ENCODE measurements at regions of chr7 and their contacts with region 1.

Region 1: GRCh38 chr7:140003913-140004382 is 58.8 kb downstream of the PARP12 start:
- DNase-seq: peak; percentile 38 to 67
- H3K4me3 ChIP-seq: no peak overlapping the region
- H3K4me3 Mint-ChIP-seq: no peak overlapping the region
- H3K27ac Mint-ChIP-seq: no peak overlapping the region
- H3K4me1 ChIP-seq: no peaks in the 10 kb centered on the region
- H3K4me1 Mint-ChIP-seq: no peaks in the 10 kb centered on the region
- H3K27me3 ChIP-seq: no peaks in the 10 kb centered on the region
- H3K27me3 Mint-ChIP-seq: no peaks in the 10 kb centered on the region
- CTCF ChIP-seq: peak; percentile 50 to 57

Region 2: GRCh38 chr7:139500770-139501138 is 503.2 kb before region 1 on chr7:
- CTCF ChIA-PET with region 1: interaction called, 3 read pairs
- POLR2A ChIA-PET with region 1: no interaction called
- intact Hi-C with region 1: loop called (anchors 1 kb)
- DNase-seq: no peak
- H3K4me3 ChIP-seq: no peak overlapping the region
- H3K4me3 Mint-ChIP-seq: peak overlapping the region; percentile 72
- H3K27ac Mint-ChIP-seq: no peak overlapping the region
- H3K4me1 ChIP-seq: no peaks in the 10 kb centered on the region; the same call in 1 of the 2 replicates
- H3K4me1 Mint-ChIP-seq: peaks cover 7% of the 10 kb centered on the region
- H3K27me3 ChIP-seq: no peaks in the 10 kb centered on the region
- H3K27me3 Mint-ChIP-seq: no peaks in the 10 kb centered on the region
- CTCF ChIP-seq: no peak

Region 3: GRCh38 chr7:139620676-139621344 is 383.1 kb before region 1 on chr7:
- CTCF ChIA-PET with region 1: interaction called, 16 read pairs
- POLR2A ChIA-PET with region 1: no interaction called
- intact Hi-C with region 1: loop called (anchors 1 kb)
- DNase-seq: peak; percentile 61 to 82
- H3K4me3 ChIP-seq: no peak overlapping the region
- H3K4me3 Mint-ChIP-seq: no peak overlapping the region
- H3K27ac Mint-ChIP-seq: no peak overlapping the region
- H3K4me1 ChIP-seq: no peaks in the 10 kb centered on the region
- H3K4me1 Mint-ChIP-seq: peaks cover 4% of the 10 kb centered on the region
- H3K27me3 ChIP-seq: no peaks in the 10 kb centered on the region
- H3K27me3 Mint-ChIP-seq: no peaks in the 10 kb centered on the region
- CTCF ChIP-seq: peak; percentile 80 to 86

Region 4: GRCh38 chr7:139777948-139778841 is 225.8 kb before region 1 on chr7 and contains the start of gene HIPK2:
- CTCF ChIA-PET with region 1: interaction called, 3 read pairs
- POLR2A ChIA-PET with region 1: no interaction called
- intact Hi-C with region 1: loop called (anchors 1 kb)
- DNase-seq: peak; percentile 72 to 84
- H3K4me3 ChIP-seq: peak within 1 kb of the TSS; percentile 80
- H3K4me3 Mint-ChIP-seq: peak within 1 kb of the TSS; percentile 94
- H3K27ac Mint-ChIP-seq: peak within 1 kb of the TSS; percentile 75
- H3K4me1 ChIP-seq: no peaks in the 10 kb centered on the region; the same call in 1 of the 2 replicates
- H3K4me1 Mint-ChIP-seq: peaks cover 7% of the 10 kb centered on the region
- H3K27me3 ChIP-seq: no peaks in the 10 kb centered on the region
- H3K27me3 Mint-ChIP-seq: peaks cover 4% of the 10 kb centered on the region
- CTCF ChIP-seq: no peak
- total RNA-seq, gene HIPK2: 35.6 and 42.8 TPM in 2 replicates

Region 5: DNA sequence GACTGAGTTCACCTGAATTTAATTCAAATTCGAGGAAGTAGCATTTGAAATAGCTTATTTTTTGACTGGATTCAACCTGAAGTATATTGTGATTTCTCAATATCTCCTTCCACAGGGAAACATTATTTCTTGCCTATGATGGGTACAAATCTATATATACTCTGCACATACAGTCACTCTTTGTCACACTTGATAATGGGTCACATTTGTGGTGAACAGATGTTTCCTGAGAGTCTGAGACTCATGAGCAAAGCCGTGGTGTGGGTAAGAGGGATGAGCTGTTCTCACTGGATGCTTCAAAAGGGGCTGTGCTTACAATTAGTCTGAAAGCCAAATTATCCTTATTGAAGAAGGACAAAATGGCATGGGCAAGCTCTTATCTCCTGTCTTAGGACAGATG is 192.9 kb before region 1 on chr7:
- CTCF ChIA-PET with region 1: no interaction called
- POLR2A ChIA-PET with region 1: no interaction called
- intact Hi-C with region 1: no loop called
- DNase-seq: no peak
- H3K4me3 ChIP-seq: no peak overlapping the region
- H3K4me3 Mint-ChIP-seq: no peak overlapping the region
- H3K27ac Mint-ChIP-seq: no peak overlapping the region
- H3K4me1 ChIP-seq: no peaks in the 10 kb centered on the region
- H3K4me1 Mint-ChIP-seq: no peaks in the 10 kb centered on the region
- H3K27me3 ChIP-seq: no peaks in the 10 kb centered on the region
- H3K27me3 Mint-ChIP-seq: peaks cover 5% of the 10 kb centered on the region
- CTCF ChIP-seq: no peak

Region 6: DNA sequence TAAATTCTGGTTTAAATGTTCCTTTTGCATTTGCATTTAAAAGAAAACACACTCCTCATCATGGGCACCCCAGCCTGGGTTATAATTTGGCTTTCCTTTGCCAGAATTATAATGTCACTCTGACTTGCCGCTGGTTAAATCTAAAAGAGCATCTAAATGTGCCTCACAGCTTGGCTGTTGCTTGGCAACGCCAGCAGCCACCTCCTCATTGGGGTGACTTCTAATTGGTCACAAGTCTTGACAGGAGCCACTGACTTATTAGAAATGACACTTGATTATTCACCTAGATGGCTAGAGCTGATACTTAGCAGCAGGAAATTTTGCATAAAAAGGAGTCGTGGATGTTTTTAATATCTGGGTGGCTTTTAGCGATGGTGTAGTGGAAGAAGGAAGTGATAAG is 60.5 kb before region 1 on chr7:
- CTCF ChIA-PET with region 1: no interaction called
- POLR2A ChIA-PET with region 1: no interaction called
- intact Hi-C with region 1: no loop called
- DNase-seq: no peak
- H3K4me3 ChIP-seq: no peak overlapping the region
- H3K4me3 Mint-ChIP-seq: no peak overlapping the region
- H3K27ac Mint-ChIP-seq: no peak overlapping the region
- H3K4me1 ChIP-seq: no peaks in the 10 kb centered on the region
- H3K4me1 Mint-ChIP-seq: no peaks in the 10 kb centered on the region
- H3K27me3 ChIP-seq: no peaks in the 10 kb centered on the region; the same call in 1 of the 2 replicates
- H3K27me3 Mint-ChIP-seq: peaks cover 14% of the 10 kb centered on the region
- CTCF ChIP-seq: no peak

Region 7: DNA sequence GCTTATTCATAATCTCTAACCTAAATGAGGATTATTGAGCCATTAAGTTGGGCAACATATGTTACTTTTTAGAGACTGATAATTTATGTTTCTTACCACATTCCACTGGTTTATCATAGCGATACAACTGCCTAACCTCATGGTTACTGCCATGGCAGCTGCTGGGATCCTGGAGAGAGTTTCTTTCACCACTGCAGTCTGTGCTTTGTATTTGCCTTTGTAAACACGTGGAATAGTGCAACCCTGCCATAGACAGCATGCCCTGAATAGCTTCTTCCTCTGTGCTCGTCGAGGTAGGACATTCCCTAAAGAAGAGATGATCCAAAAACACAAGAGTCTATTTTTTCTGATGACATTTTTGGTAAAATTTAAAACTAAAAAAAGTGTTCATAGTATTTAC is 92.5 kb after region 1 on chr7:
- CTCF ChIA-PET with region 1: no interaction called
- POLR2A ChIA-PET with region 1: no interaction called
- intact Hi-C with region 1: no loop called
- DNase-seq: no peak
- H3K4me3 ChIP-seq: no peak overlapping the region
- H3K4me3 Mint-ChIP-seq: no peak overlapping the region
- H3K27ac Mint-ChIP-seq: no peak overlapping the region
- H3K4me1 ChIP-seq: no peaks in the 10 kb centered on the region
- H3K4me1 Mint-ChIP-seq: no peaks in the 10 kb centered on the region
- H3K27me3 ChIP-seq: no peaks in the 10 kb centered on the region
- H3K27me3 Mint-ChIP-seq: no peaks in the 10 kb centered on the region
- CTCF ChIP-seq: no peak

Region 8: GRCh38 chr7:140326116-140326928 is 322.4 kb after region 1 on chr7:
- CTCF ChIA-PET with region 1: no interaction called
- POLR2A ChIA-PET with region 1: no interaction called
- intact Hi-C with region 1: loop called (anchors 10 kb)
- DNase-seq: peak; percentile 56 to 70
- H3K4me3 ChIP-seq: no peak overlapping the region
- H3K4me3 Mint-ChIP-seq: no peak overlapping the region
- H3K27ac Mint-ChIP-seq: no peak overlapping the region
- H3K4me1 ChIP-seq: 0 out of 2 replicates have a peak, but pooled peaks cover 4% of the 10 kb centered on the region
- H3K4me1 Mint-ChIP-seq: no peaks in the 10 kb centered on the region
- H3K27me3 ChIP-seq: no peaks in the 10 kb centered on the region
- H3K27me3 Mint-ChIP-seq: no peaks in the 10 kb centered on the region
- CTCF ChIP-seq: peak; percentile 64 to 86

Measured in Caco-2 (cell line).